ENCODE measurements at regions of chr5 and their contacts with region 1.

Region 1: DNA sequence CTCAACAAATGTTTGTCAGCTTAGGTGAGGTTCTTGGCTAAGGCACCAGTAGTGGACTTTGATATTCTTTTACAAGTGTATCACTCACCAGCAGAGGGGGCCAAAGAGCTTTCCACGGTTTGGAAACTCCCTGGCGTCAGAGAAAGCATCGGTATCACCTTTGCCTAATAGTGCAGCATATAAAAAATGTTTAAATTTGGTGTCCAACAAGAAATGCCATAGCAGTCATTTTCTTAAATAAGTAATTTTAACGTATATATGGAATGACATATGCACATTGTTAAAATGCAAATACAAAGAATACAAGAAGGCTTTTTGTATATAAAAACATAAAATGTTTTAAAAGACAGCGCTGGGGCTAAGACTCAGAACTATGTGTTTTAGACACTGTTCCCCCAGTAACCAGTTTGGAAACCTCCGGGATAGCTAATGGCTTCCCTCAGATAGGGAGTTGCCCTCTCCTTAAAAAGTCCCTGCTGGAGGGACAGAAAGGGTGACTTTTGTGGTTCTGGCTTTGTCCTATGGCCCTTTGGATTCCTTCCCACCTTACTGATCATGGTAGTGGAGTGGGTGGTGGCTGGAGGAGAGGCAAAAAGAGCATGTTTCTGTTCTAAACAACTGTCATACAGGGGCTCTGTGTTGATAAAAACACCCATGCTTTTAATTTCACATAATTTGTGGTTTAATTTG is 124.6 kb downstream of the GPBP1 start:
- DNase-seq: peak; percentile 84
- ATAC-seq: peak; percentile 73
- H3K4me3 ChIP-seq: no peak overlapping the region
- H3K27ac ChIP-seq: peak overlapping the region; percentile 42; the same call in 1 of the 2 replicates
- H3K4me1 ChIP-seq: peaks cover 10% of the 10 kb centered on the region
- H3K27me3 ChIP-seq: 0 out of 2 replicates have a peak, but pooled peaks cover 2% of the 10 kb centered on the region
- CTCF ChIP-seq: peak; percentile 90
- POLR2A ChIP-seq: no peak
- RAD21 ChIP-seq: peak; percentile 91

Region 2: DNA sequence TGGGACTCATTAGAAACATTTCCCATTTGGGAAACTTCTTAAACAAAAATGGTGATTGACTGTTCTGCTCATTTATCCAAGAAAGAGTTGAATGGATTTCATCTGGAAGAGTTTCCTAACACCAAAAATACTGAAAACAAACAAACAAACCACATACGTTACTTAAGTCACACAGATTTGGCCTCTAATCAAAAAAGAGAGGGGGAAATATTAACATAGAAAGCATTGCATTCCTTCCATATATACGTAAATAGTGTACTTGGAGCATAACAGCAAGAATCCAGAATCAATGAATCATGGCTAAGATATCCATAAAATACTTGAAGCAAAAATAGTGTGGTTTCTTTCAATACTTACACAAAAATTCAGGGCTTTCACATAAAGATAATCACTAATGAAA is 672.9 kb before region 1 on chr5:
- CTCF ChIA-PET with region 1: no interaction called
- POLR2A ChIA-PET with region 1: no interaction called
- dilution Hi-C with region 1: no loop called
- in situ Hi-C with region 1: no loop called
- intact Hi-C with region 1: no loop called
- DNase-seq: peak; percentile 96
- ATAC-seq: peak; percentile 85
- H3K4me3 ChIP-seq: no peak overlapping the region
- H3K27ac ChIP-seq: peak overlapping the region; percentile 71; the same call in 1 of the 2 replicates
- H3K4me1 ChIP-seq: peaks cover 1% of the 10 kb centered on the region; the same call in 1 of the 2 replicates
- H3K27me3 ChIP-seq: no peaks in the 10 kb centered on the region
- CTCF ChIP-seq: no peak
- POLR2A ChIP-seq: no peak
- RAD21 ChIP-seq: no peak

Region 3: DNA sequence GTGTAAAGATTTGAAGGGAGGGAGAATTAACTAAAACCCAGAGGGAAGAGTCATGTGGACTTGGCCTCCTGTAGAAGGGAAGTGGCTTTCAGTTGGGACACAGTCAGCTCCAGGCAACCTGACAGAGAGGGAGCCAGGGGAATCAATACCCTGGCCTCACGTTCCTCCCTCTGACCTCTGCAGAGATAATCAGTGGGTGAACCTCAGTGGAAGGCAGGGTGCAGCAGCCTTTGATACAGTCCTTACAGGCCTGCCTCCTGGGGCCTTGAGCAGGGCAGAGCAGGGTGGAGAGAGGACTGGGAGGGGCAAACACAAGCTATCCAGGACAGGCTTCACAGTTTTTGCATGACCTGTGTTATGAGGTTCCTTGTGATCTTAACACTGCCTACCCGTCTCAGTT is 186.4 kb before region 1 on chr5:
- CTCF ChIA-PET with region 1: no interaction called
- POLR2A ChIA-PET with region 1: no interaction called
- dilution Hi-C with region 1: no loop called
- in situ Hi-C with region 1: no loop called
- intact Hi-C with region 1: no loop called
- DNase-seq: no peak
- ATAC-seq: no peak
- H3K4me3 ChIP-seq: no peak overlapping the region
- H3K27ac ChIP-seq: no peak overlapping the region
- H3K4me1 ChIP-seq: no peaks in the 10 kb centered on the region
- H3K27me3 ChIP-seq: peaks cover 4% of the 10 kb centered on the region
- CTCF ChIP-seq: no peak
- POLR2A ChIP-seq: no peak
- RAD21 ChIP-seq: no peak

Region 4: GRCh38 chr5:57383093-57383861 is 84.8 kb after region 1 on chr5:
- CTCF ChIA-PET with region 1: interaction called, 3 read pairs
- POLR2A ChIA-PET with region 1: no interaction called
- dilution Hi-C with region 1: no loop called
- in situ Hi-C with region 1: no loop called
- intact Hi-C with region 1: loop called (anchors 2 kb)
- DNase-seq: peak; percentile 99
- ATAC-seq: peak; percentile 93
- H3K4me3 ChIP-seq: no peak overlapping the region
- H3K27ac ChIP-seq: peak overlapping the region; percentile 94
- H3K4me1 ChIP-seq: peaks cover 8% of the 10 kb centered on the region
- H3K27me3 ChIP-seq: no peaks in the 10 kb centered on the region
- CTCF ChIP-seq: peak; percentile 59
- POLR2A ChIP-seq: no peak
- RAD21 ChIP-seq: peak; percentile 66

Region 5: GRCh38 chr5:57499262-57500050 is 201.0 kb after region 1 on chr5:
- CTCF ChIA-PET with region 1: interaction called, 9 read pairs
- POLR2A ChIA-PET with region 1: no interaction called
- dilution Hi-C with region 1: no loop called
- in situ Hi-C with region 1: no loop called
- intact Hi-C with region 1: loop called (anchors 1 kb)
- DNase-seq: peak; percentile 69
- ATAC-seq: 0 out of 2 replicates have a peak, but pooled peaks have one; percentile 9
- H3K4me3 ChIP-seq: no peak overlapping the region
- H3K27ac ChIP-seq: no peak overlapping the region; the same call in 1 of the 2 replicates
- H3K4me1 ChIP-seq: peaks cover 13% of the 10 kb centered on the region
- H3K27me3 ChIP-seq: no peaks in the 10 kb centered on the region
- CTCF ChIP-seq: peak; percentile 77
- POLR2A ChIP-seq: no peak
- RAD21 ChIP-seq: peak; percentile 84

Region 6: DNA sequence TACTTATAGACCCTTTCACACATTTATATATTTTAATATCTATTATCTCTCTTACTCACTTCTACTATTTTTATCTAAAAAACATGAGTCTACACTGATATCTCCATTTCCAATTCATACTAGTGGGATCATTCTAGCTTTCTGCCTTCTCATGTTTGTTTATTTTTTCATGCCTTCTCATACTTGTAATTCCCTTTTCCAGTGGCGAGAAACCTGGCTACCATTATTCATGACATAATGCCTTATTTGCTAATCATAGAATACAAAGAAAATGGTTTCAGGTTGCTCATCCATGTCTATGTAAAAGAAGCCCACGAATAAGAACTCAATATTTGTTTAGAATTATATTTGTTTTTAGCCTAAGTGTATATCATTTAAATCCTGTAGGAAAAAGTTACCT is 416.9 kb after region 1 on chr5:
- CTCF ChIA-PET with region 1: no interaction called
- POLR2A ChIA-PET with region 1: no interaction called
- dilution Hi-C with region 1: no loop called
- in situ Hi-C with region 1: no loop called
- intact Hi-C with region 1: no loop called
- DNase-seq: peak; percentile 65
- ATAC-seq: no peak
- H3K4me3 ChIP-seq: no peak overlapping the region
- H3K27ac ChIP-seq: no peak overlapping the region
- H3K4me1 ChIP-seq: peaks cover 3% of the 10 kb centered on the region; the same call in 1 of the 2 replicates
- H3K27me3 ChIP-seq: no peaks in the 10 kb centered on the region
- CTCF ChIP-seq: no peak
- POLR2A ChIP-seq: no peak
- RAD21 ChIP-seq: no peak

Region 7: GRCh38 chr5:57779383-57780223 is 481.2 kb after region 1 on chr5:
- CTCF ChIA-PET with region 1: interaction called, 20 read pairs
- POLR2A ChIA-PET with region 1: no interaction called
- dilution Hi-C with region 1: no loop called
- in situ Hi-C with region 1: loop called (anchors 5 kb)
- intact Hi-C with region 1: loop called (anchors 1 kb)
- DNase-seq: peak; percentile 83
- ATAC-seq: peak; percentile 77
- H3K4me3 ChIP-seq: no peak overlapping the region
- H3K27ac ChIP-seq: peak overlapping the region; percentile 58; the same call in 1 of the 2 replicates
- H3K4me1 ChIP-seq: peaks cover 20% of the 10 kb centered on the region
- H3K27me3 ChIP-seq: no peaks in the 10 kb centered on the region
- CTCF ChIP-seq: peak; percentile 81
- POLR2A ChIP-seq: no peak; the same call in 1 of the 2 replicates
- RAD21 ChIP-seq: peak; percentile 92

Region 8: GRCh38 chr5:58156986-58157701 is 858.7 kb after region 1 on chr5:
- CTCF ChIA-PET with region 1: no interaction called
- POLR2A ChIA-PET with region 1: no interaction called
- dilution Hi-C with region 1: no loop called
- in situ Hi-C with region 1: loop called (anchors 25 kb)
- intact Hi-C with region 1: no loop called
- DNase-seq: peak; percentile 53
- ATAC-seq: no peak
- H3K4me3 ChIP-seq: no peak overlapping the region
- H3K27ac ChIP-seq: no peak overlapping the region
- H3K4me1 ChIP-seq: no peaks in the 10 kb centered on the region
- H3K27me3 ChIP-seq: no peaks in the 10 kb centered on the region; the same call in 1 of the 2 replicates
- CTCF ChIP-seq: no peak
- POLR2A ChIP-seq: no peak
- RAD21 ChIP-seq: no peak

Measured in IMR-90 (cell line).